ENCODE measurements at regions of chr12 and their contacts with region 1.

Region 1: GRCh38 chr12:92445253-92446082 is 257.3 kb upstream of the PLEKHG7 start:
- DNase-seq: no peak
- ATAC-seq: peak; percentile 54

Region 2: DNA sequence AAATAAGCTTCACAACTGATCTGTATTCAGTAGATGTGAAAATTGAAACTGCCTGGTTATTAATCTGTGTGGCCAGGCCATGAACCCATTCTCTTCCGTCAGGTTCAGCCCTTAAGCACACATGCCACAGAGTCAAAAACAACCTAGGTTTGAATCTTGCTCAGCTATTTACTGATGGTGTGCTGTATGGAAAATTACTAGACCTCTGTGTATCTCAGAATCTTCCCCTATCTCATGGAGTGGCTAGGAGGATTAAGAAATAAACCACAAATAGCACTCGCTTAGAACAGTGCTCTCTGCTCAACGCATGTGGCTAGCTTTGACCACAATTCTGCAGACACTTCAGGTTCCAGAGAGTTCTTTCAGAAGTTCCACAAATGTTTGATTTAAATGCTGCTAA is 16.6 kb after region 1 on chr12:
- intact Hi-C with region 1: no loop called
- DNase-seq: no peak
- ATAC-seq: no peak

Region 3: DNA sequence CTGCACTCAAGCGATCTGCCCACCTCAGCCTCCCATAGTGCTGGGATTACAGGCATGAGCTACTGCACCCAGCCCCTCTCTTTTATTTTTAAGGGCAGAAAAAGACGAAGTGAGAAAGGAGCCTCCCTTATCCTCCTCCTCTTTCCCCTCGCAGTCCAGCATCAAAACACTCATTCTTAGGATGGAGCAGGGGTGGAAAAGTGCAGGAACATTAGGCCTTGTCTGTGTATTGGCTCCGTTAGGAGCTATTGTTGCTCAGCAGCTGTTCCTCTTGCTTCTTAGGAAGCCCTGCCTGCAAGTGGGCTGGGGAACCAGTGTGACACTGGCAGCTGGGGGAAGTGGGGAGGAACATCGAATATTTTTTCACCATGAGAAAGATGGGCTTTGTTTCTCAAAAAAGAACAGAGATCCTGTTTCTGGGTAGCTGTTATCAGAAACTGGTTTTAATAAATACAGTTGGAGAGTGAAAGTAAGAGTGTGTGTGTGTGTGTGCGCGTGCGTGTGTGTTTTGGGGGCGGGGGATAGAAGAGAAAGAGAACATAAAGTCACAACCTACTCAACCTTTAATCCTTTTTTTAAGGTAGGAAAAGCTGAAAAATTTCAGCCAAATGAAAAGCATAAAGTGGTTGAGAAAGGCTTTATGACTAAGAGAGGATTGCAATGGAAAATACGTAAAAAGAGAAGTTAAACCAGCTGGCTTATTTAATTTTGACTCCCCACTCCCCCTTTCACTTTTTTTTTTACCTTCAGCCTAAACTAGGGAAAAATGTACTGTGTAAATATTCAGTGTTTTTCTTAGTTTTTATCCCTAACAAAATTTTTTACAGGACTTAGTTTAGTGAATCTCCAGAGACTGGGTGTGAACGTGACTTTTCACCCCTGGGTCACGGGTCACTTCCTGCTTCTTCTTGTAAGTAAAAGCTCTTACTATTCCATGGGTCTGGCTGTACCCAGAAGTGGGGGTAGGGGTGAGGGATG is 60.1 kb after region 1 on chr12:
- intact Hi-C with region 1: loop called (anchors 10 kb)
- DNase-seq: peak; percentile 78
- ATAC-seq: peak; percentile 55